Right ventricle myocardium inferior (tissue), 1 donor: ENCODE measurements at regions of chr3 and their contacts with region 1.

Region 1: GRCh38 chr3:124584552-124585391 is 145.5 kb upstream of the UMPS start:
- DNase-seq: peak; percentile 84
- ATAC-seq: peak; percentile 94

Region 2: GRCh38 chr3:124529826-124530571 is 54.8 kb before region 1 on chr3:
- intact Hi-C with region 1: no loop called
- DNase-seq: no peak
- ATAC-seq: no peak

Region 3: GRCh38 chr3:124627501-124627908 is 42.7 kb after region 1 on chr3:
- intact Hi-C with region 1: loop called (anchors 5 kb)
- DNase-seq: no peak
- ATAC-seq: no peak